PC-3 (cell line): ENCODE measurements at regions of chr11 and their contacts with region 1.

Region 1: GRCh38 chr11:77512092-77512491 is 38.2 kb upstream of the PAK1 start:
- DNase-seq: no peak
- ATAC-seq: no peak
- H3K4me3 ChIP-seq: no peak overlapping the region
- H3K27ac ChIP-seq: no peak overlapping the region
- H3K4me1 ChIP-seq: peaks cover 49% of the 10 kb centered on the region
- H3K27me3 ChIP-seq: peaks cover 20% of the 10 kb centered on the region
- CTCF ChIP-seq: no peak

Region 2: GRCh38 chr11:77091146-77091940 is 420.7 kb before region 1 on chr11:
- CTCF ChIA-PET with region 1: no interaction called
- POLR2A ChIA-PET with region 1: no interaction called
- intact Hi-C with region 1: no loop called
- DNase-seq: peak; percentile 93
- ATAC-seq: peak; percentile 93
- H3K4me3 ChIP-seq: no peak overlapping the region
- H3K27ac ChIP-seq: no peak overlapping the region
- H3K4me1 ChIP-seq: peaks cover 23% of the 10 kb centered on the region
- H3K27me3 ChIP-seq: no peaks in the 10 kb centered on the region
- CTCF ChIP-seq: peak; percentile 98

Region 3: GRCh38 chr11:77299528-77299993 is 212.5 kb before region 1 on chr11:
- CTCF ChIA-PET with region 1: no interaction called
- POLR2A ChIA-PET with region 1: no interaction called
- intact Hi-C with region 1: loop called (anchors 10 kb)
- DNase-seq: peak; percentile 99
- ATAC-seq: peak; percentile 87
- H3K4me3 ChIP-seq: no peak overlapping the region
- H3K27ac ChIP-seq: peak overlapping the region; percentile 93
- H3K4me1 ChIP-seq: peaks cover 21% of the 10 kb centered on the region
- H3K27me3 ChIP-seq: no peaks in the 10 kb centered on the region
- CTCF ChIP-seq: no peak

Region 4: GRCh38 chr11:77589521-77590193 is 77.6 kb after region 1 on chr11 and contains the start of gene AQP11:
- CTCF ChIA-PET with region 1: no interaction called
- POLR2A ChIA-PET with region 1: no interaction called
- intact Hi-C with region 1: no loop called
- DNase-seq: peak; percentile 94
- ATAC-seq: peak; percentile 88
- H3K4me3 ChIP-seq: peak within 1 kb of the TSS; percentile 82
- H3K27ac ChIP-seq: peak within 1 kb of the TSS; percentile 24; the same call in 1 of the 2 replicates
- H3K4me1 ChIP-seq: peaks cover 19% of the 10 kb centered on the region
- H3K27me3 ChIP-seq: no peaks in the 10 kb centered on the region
- CTCF ChIP-seq: no peak
- total RNA-seq, gene AQP11: 2.2 and 3.1 TPM in 2 replicates

Region 5: GRCh38 chr11:77637345-77638165 is 125.5 kb after region 1 on chr11 and contains the start of gene CLNS1A:
- CTCF ChIA-PET with region 1: no interaction called
- POLR2A ChIA-PET with region 1: no interaction called
- intact Hi-C with region 1: no loop called
- DNase-seq: peak; percentile 93
- ATAC-seq: peak; percentile 99
- H3K4me3 ChIP-seq: peak within 1 kb of the TSS; percentile 85
- H3K27ac ChIP-seq: peak within 1 kb of the TSS; percentile 64
- H3K4me1 ChIP-seq: peaks cover 19% of the 10 kb centered on the region
- H3K27me3 ChIP-seq: no peaks in the 10 kb centered on the region
- CTCF ChIP-seq: no peak
- total RNA-seq, gene CLNS1A: 302 and 361 TPM in 2 replicates